ENCODE measurements at regions of chr2 and their contacts with region 1.

Region 1: GRCh38 chr2:72993147-72993932 is 76.0 kb downstream of the EMX1 start:
- DNase-seq: peak; percentile 62
- ATAC-seq: peak; percentile 60
- H3K4me3 ChIP-seq: no peak overlapping the region
- H3K27ac ChIP-seq: no peak overlapping the region
- H3K4me1 ChIP-seq: no peaks in the 10 kb centered on the region
- H3K27me3 ChIP-seq: no peaks in the 10 kb centered on the region
- CTCF ChIP-seq: peak; percentile 83

Region 2: GRCh38 chr2:72548081-72548764 is 445.1 kb before region 1 on chr2:
- intact Hi-C with region 1: no loop called
- DNase-seq: no peak
- ATAC-seq: no peak
- H3K4me3 ChIP-seq: no peak overlapping the region
- H3K27ac ChIP-seq: no peak overlapping the region
- H3K4me1 ChIP-seq: no peaks in the 10 kb centered on the region
- H3K27me3 ChIP-seq: no peaks in the 10 kb centered on the region
- CTCF ChIP-seq: no peak

Region 3: GRCh38 chr2:73176881-73177644 is 183.7 kb after region 1 on chr2:
- intact Hi-C with region 1: loop called (anchors 5 kb)
- DNase-seq: peak; percentile 95
- ATAC-seq: peak; percentile 97
- H3K4me3 ChIP-seq: peak overlapping the region; percentile 57
- H3K27ac ChIP-seq: peak overlapping the region; percentile 74
- H3K4me1 ChIP-seq: peaks cover 18% of the 10 kb centered on the region
- H3K27me3 ChIP-seq: peaks cover 21% of the 10 kb centered on the region
- CTCF ChIP-seq: peak; percentile 97